Heart left ventricle (tissue), 16 donors: ENCODE measurements at regions of chr19 and their contacts with region 1.

Region 1: GRCh38 chr19:16106121-16106520 is 5.6 kb upstream of the RAB8A start:
- DNase-seq: no peak
- ATAC-seq: no peak
- H3K4me3 ChIP-seq: no peak overlapping the region
- H3K27ac ChIP-seq: peak overlapping the region in 1 of 12 donors; percentile 64
- H3K4me1 ChIP-seq: peaks cover 0 to 7% (median 3%) of the 10 kb centered on the region in 12 donors
- H3K27me3 ChIP-seq: no peaks in the 10 kb centered on the region
- CTCF ChIP-seq: no peak
- POLR2A ChIP-seq: no peak

Region 2: GRCh38 chr19:16051254-16052025 is 54.7 kb before region 1 on chr19:
- intact Hi-C with region 1: loop called in 1 of 10 experiments (anchors 5 kb)
- DNase-seq: no peak
- ATAC-seq: peak in 3 of 4 donors; percentile 29 to 79 (median 69)
- H3K4me3 ChIP-seq: no peak overlapping the region
- H3K27ac ChIP-seq: no peak overlapping the region
- H3K4me1 ChIP-seq: no peaks in the 10 kb centered on the region
- H3K27me3 ChIP-seq: peaks cover 0 to 9% (median 0%) of the 10 kb centered on the region in 9 donors
- CTCF ChIP-seq: peak in 3 of 12 donors; percentile 12 to 19 (median 16)
- POLR2A ChIP-seq: no peak